Sciatic nerve (tissue), 2 donors: ENCODE measurements at regions of chr5 and their contacts with region 1.

Region 1: DNA sequence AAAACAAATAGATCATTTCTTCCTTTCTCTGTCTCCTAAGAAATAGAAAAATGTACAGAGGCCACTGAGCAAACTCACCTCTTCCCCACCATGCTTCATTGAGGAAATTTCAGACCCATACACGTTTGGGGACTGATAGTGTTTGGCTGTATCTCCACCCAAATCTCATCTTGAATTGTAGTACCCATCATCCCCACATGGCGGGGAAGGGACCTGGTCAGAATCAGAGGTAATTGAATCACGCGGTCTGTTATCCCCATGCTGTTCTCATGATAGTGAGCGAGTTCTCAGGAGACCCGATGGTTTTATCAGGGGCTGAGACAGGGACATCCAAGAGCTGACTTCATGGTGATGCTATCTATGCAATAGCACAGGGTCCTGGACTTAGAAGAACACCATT is 1655.8 kb downstream of the MAT2B start:
- DNase-seq: no peak
- ATAC-seq: no peak

Region 2: GRCh38 chr5:163283360-163283759 is 1877.8 kb before region 1 on chr5:
- intact Hi-C with region 1: loop called (anchors 5 kb)
- DNase-seq: no peak
- ATAC-seq: no peak

Region 3: GRCh38 chr5:165224366-165225045 is 63.3 kb after region 1 on chr5:
- intact Hi-C with region 1: no loop called
- DNase-seq: no peak
- ATAC-seq: no peak

Region 4: GRCh38 chr5:165258197-165258771 is 97.1 kb after region 1 on chr5:
- intact Hi-C with region 1: no loop called
- DNase-seq: no peak
- ATAC-seq: no peak